ENCODE measurements at regions of chr12 and their contacts with region 1.

Region 1: DNA sequence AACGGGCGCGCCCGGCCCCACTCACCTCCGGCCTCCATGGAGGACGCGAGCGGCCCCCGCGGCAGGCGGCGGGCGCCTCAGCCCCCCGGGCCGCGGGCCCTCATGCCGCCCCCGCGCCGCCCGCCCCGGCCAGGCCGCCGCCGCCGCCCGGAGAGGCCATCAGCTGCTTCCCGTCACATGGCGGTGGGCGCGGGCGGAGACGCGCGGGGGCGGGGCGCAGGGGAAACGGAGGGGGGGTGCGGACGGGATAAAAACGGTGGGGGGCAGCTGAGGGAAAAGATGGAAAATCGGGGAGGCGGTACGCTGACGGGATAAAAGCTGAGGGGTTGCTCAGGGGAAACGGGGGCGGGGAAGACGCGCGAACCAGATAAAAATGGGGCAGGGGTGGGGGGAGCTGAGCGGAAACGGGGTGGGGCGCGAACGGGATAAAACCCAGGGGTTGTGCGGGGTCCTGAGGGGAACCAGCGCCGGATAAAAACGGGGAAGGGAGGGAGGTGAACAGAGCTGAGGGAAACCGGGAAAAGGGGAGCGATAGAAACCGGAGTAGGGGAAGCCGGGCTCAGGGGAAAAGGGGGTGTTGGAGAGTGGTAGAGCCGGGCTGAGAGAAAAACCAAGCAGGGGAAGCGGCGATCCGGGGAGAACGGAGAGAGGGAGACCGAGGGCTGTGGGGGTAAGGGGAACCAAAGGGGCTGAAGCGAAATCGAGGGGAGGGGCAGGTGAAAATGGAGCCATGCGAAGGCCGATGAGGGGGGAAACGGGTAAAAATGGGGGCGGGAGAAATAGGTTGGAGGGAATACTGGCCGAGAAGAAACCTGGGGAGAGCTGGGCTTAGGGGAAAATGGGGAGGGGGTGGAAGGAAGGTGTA is at the start of gene WSB2:
- DNase-seq: peak; percentile 64
- H3K4me3 ChIP-seq: peak within 1 kb of the TSS; percentile 61 to 99 (median 81)
- H3K27ac ChIP-seq: peak within 1 kb of the TSS; percentile 89
- H3K4me1 ChIP-seq: peaks cover 17% of the 10 kb centered on the region
- H3K27me3 ChIP-seq: no peaks in the 10 kb centered on the region
- CTCF ChIP-seq: no peak
- POLR2A ChIP-seq: no peak
- total RNA-seq, gene WSB2: 73.6 and 85.3 TPM in 2 replicates

Region 2: DNA sequence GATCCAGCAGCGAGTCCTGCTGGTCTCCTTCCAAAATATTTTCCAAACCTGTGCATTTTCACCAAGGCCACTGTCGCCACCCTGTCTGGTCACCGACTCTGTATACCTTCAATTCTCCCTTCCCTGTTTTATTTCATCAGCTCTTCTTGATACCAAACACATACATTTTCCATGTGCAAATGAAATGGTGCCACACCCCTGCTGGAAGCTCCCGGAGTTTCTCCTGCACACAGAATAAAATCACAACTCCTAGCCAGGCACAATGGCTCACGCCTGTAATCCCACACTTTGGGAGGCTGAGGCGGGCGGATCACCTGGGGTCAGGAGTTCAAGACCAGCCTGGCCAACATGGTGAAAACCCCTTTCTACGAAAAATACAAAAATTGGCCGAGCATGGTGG is 28.5 kb after region 1 on chr12:
- CTCF ChIA-PET with region 1: interaction called, 3 read pairs
- POLR2A ChIA-PET with region 1: no interaction called
- dilution Hi-C with region 1: no loop called
- intact Hi-C with region 1: loop called (anchors 1 kb)
- DNase-seq: no peak
- H3K4me3 ChIP-seq: no peak overlapping the region
- H3K27ac ChIP-seq: no peak overlapping the region
- H3K4me1 ChIP-seq: no peaks in the 10 kb centered on the region
- H3K27me3 ChIP-seq: no peaks in the 10 kb centered on the region
- CTCF ChIP-seq: no peak
- POLR2A ChIP-seq: no peak

Region 3: GRCh38 chr12:118103604-118104382 is 42.5 kb after region 1 on chr12 and contains the start of gene VSIG10:
- CTCF ChIA-PET with region 1: interaction called, 4 read pairs
- POLR2A ChIA-PET with region 1: no interaction called
- dilution Hi-C with region 1: no loop called
- intact Hi-C with region 1: loop called (anchors 1 kb)
- DNase-seq: peak; percentile 74
- H3K4me3 ChIP-seq: peak within 1 kb of the TSS; percentile 48 to 78 (median 52)
- H3K27ac ChIP-seq: peak within 1 kb of the TSS; percentile 61
- H3K4me1 ChIP-seq: peaks cover 11% of the 10 kb centered on the region
- H3K27me3 ChIP-seq: no peaks in the 10 kb centered on the region
- CTCF ChIP-seq: no peak
- POLR2A ChIP-seq: no peak
- total RNA-seq, gene VSIG10: 38.4 and 38.6 TPM in 2 replicates

Region 4: DNA sequence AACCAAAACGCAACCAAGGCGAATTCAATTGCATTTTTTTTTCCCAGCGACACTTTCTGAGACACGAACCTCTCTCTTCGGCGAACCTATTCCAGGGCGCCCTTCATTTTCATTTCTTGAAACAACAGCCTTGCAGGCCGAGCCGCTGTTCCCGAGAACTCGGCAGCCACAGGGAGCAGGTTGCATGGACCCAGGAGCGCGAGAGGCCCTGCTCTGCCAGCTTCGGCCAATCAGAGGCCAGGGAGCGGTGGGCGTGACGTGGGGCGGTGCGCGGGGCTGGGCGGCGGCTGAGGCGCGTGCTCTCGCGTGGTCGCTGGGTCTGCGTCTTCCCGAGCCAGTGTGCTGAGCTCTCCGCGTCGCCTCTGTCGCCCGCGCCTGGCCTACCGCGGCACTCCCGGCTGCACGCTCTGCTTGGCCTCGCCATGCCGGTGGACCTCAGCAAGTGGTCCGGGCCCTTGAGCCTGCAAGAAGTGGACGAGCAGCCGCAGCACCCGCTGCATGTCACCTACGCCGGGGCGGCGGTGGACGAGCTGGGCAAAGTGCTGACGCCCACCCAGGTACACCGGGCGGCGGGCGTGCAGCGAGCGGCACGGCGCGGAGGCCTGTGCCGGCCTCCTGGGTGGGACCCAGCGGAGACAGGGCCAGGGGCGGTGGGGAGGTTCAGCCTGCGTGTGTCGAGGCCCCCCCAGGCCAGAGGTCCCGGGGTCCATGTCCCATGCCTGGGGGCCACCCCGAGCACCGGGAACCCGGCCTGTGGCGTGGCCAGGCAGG is 74.7 kb after region 1 on chr12 and contains the start of gene PEBP1:
- CTCF ChIA-PET with region 1: interaction called, 5 read pairs
- POLR2A ChIA-PET with region 1: no interaction called
- dilution Hi-C with region 1: no loop called
- intact Hi-C with region 1: loop called (anchors 1 kb)
- DNase-seq: peak; percentile 94
- H3K4me3 ChIP-seq: peak within 1 kb of the TSS; percentile 48 to 82 (median 75)
- H3K27ac ChIP-seq: peak within 1 kb of the TSS; percentile 49
- H3K4me1 ChIP-seq: peaks cover 4% of the 10 kb centered on the region
- H3K27me3 ChIP-seq: no peaks in the 10 kb centered on the region
- CTCF ChIP-seq: no peak
- POLR2A ChIP-seq: peak; percentile 91
- total RNA-seq, gene PEBP1: 146 and 185 TPM in 2 replicates